Esophagus squamous epithelium (tissue), 5 donors: ENCODE measurements at regions of chr10 and their contacts with region 1.

Region 1: DNA sequence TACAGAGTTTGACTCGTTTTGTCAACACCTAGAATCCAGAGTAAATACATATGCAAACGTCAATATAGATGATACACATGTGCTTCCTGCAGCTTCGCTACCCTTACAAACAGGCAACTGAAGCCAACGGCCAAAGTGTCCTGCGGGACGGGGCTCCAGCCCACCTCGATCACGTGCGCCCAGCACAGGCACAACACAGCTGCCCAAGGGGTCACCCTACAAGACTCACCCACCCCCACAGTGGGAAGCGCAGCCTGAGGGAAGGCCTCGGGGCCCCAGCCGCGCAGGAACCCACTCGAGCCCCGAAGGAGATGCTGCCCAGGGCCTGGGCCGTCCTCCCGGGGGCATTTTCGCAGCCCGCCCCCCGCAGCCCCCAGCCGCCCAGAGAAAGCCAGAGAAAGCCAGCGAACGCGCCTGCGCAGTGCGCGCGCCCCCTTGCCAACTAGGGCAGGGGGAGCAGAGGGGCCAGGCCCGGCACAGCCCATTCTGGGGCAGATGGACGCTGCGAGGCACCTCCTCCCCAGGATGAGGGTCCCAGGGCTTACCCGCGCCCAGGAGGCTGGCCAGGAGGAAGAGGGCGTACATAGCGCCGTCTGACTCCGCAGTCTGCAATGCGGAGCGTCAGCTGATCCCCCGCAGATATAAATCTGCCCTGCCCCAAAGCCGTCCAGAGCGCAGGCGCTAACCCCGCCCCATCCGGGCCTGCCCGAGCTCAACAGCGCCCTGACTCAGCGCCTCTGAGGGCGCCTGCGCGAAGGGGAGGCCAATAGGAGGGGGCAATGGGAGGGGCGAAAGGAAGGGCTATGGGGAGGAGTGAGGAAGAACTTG is at the start of gene PSAP:
- DNase-seq: peak; percentile 90
- H3K4me3 ChIP-seq: peak within 1 kb of the TSS; percentile 84 to 100 (median 92)
- H3K27ac ChIP-seq: peak within 1 kb of the TSS; percentile 98 to 100 (median 98)
- H3K4me1 ChIP-seq: peaks cover 13 to 57% (median 43%) of the 10 kb centered on the region in 3 donors
- H3K27me3 ChIP-seq: no peaks in the 10 kb centered on the region
- CTCF ChIP-seq: peak in 1 of 6 experiments; percentile 42
- POLR2A ChIP-seq: peak in 3 of 4 donors; percentile 91 to 100 (median 98)
- total RNA-seq, gene PSAP: 280 to 623 (median 490) TPM

Region 2: DNA sequence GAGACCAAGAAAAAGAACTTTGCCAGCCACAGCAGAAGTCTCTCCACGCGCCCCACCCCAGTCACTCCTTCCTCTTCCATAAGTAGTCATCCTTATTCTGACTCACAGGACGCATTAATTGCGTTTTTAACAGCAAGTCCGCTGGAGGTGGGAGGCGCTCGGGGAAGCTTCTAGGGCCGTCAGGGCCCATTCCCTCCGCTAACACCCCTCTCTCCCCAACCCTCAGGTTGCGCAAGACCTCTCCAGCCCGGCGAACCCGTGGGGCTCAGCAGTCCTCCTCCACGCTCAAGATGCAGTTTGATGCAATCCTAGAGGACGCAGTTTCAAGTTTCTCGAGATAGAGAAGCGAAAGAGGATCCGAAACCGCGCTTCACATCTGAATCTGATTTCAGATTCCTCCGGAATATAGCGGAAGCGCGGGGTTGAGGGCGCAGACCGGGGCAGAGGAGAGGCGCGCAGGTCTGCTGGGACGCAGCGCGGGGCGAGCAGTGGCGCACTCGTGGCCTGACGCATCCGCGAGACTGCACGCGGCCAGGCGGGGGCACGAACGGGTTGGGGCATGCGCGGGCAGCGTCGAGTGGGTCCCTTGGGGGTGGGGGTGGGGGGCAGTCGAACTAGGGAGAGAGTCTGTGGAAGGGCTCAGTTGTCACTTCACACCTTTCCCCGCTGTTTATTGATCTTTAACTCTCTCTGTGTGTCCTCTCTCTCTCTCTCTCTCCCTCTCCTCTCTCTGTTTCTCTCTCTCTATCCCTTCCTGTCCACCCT is 38.0 kb after region 1 on chr10:
- intact Hi-C with region 1: loop called (anchors 5 kb)
- DNase-seq: peak; percentile 50
- H3K4me3 ChIP-seq: peak overlapping the region; percentile 47 to 77 (median 55)
- H3K27ac ChIP-seq: peak overlapping the region; percentile 90 to 98 (median 94)
- H3K4me1 ChIP-seq: peaks cover 9 to 47% (median 15%) of the 10 kb centered on the region in 3 donors
- H3K27me3 ChIP-seq: no peaks in the 10 kb centered on the region
- CTCF ChIP-seq: peak in 1 of 6 experiments; percentile 10
- POLR2A ChIP-seq: peak in 2 of 4 donors; percentile 54 to 63

Region 3: GRCh38 chr10:71957546-71958275 is 106.9 kb after region 1 on chr10:
- intact Hi-C with region 1: no loop called
- DNase-seq: no peak
- H3K4me3 ChIP-seq: no peak overlapping the region
- H3K27ac ChIP-seq: no peak overlapping the region
- H3K4me1 ChIP-seq: peaks cover 4 to 45% (median 5%) of the 10 kb centered on the region in 3 donors
- H3K27me3 ChIP-seq: no peaks in the 10 kb centered on the region
- CTCF ChIP-seq: peak in 1 of 6 experiments; percentile 9
- POLR2A ChIP-seq: no peak